ENCODE measurements at regions of chr13 and their contacts with region 1.

Region 1: GRCh38 chr13:113208424-113209335 is at the start of gene PCID2:
- DNase-seq: peak; percentile 60 to 93
- H3K4me3 ChIP-seq: peak within 1 kb of the TSS; percentile 98 to 99
- H3K27ac ChIP-seq: peak within 1 kb of the TSS; percentile 98
- H3K4me1 ChIP-seq: peaks cover 3 to 51% of the 10 kb centered on the region in 2 donors
- H3K27me3 ChIP-seq: no peaks in the 10 kb centered on the region
- CTCF ChIP-seq: no peak
- total RNA-seq, gene PCID2: 50.8 TPM

Region 2: DNA sequence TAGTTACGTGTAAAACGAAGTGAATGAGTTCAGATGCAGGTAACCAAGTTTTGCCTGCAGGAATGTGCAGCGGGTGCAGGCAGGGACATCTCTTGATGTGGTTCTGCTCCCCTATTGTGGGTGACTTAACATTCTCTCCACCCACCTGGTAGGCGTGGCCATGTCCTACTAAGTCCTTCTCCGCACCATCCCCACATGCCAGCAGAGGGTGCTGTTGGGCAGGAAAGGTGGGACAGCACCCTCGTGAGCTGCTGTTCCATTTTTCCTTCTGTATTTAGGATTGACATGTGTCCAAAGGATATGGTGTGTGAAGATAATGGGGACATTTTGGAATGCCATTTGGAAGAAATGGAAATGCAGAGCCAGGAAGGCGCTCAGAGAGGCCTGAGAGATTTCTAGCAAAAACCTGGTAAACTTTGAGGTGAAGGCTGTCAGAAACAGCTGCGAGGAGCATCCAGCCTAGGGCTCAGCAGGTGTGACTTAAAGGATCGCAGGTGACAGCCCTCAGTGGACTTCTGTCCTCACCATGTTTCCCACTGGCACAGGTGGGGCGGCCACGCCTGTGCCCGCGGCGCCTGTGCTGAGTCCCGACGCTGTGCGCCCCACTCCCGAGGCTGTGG is 265.9 kb before region 1 on chr13:
- intact Hi-C with region 1: loop called (anchors 5 kb)
- DNase-seq: peak; percentile 79 to 97
- H3K4me3 ChIP-seq: peak overlapping the region; percentile 69 to 80
- H3K27ac ChIP-seq: peak overlapping the region in 1 of 2 donors; percentile 5
- H3K4me1 ChIP-seq: peaks cover 9 to 10% of the 10 kb centered on the region in 2 donors
- H3K27me3 ChIP-seq: no peaks in the 10 kb centered on the region
- CTCF ChIP-seq: peak; percentile 78 to 97 (median 83)

Region 3: GRCh38 chr13:113153810-113154748 is 54.6 kb before region 1 on chr13:
- intact Hi-C with region 1: loop called (anchors 1 kb)
- DNase-seq: peak in 1 of 2 donors; percentile 88
- H3K4me3 ChIP-seq: peak overlapping the region; percentile 39 to 63
- H3K27ac ChIP-seq: peak overlapping the region; percentile 51 to 59
- H3K4me1 ChIP-seq: peaks cover 0 to 11% of the 10 kb centered on the region in 2 donors
- H3K27me3 ChIP-seq: no peaks in the 10 kb centered on the region
- CTCF ChIP-seq: no peak

Region 4: DNA sequence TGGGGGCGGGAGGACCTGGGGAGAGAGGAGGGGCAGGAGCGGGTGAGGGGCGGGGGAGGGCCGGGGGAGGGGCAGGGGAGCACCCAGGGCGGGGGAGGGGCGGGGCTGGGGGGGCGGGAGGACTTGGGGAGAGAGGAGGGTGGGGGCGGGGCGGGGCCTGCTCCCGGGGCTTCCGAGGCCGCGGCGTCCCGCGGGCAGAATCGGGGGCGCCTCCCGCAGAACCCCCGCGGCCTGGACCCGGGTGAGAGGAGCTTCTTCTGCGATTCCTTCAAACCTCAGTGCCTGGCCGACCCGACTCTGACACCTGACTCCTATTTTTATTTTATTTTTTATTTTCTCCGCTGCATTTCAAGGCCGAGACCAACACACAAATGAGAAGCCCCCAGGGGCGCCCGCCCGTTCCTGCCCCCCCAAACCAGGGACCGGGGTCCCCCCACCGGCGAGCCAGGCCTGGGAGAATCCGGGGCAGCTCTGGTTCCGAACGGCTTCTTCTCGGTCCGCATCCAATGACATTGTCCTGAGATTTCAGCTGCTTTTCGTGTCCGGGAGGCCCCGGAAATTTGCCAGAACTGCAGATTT is 155.7 kb after region 1 on chr13:
- intact Hi-C with region 1: loop called (anchors 5 kb)
- DNase-seq: peak in 1 of 2 donors; percentile 61
- H3K4me3 ChIP-seq: peak overlapping the region; percentile 45 to 85
- H3K27ac ChIP-seq: peak overlapping the region in 1 of 2 donors; percentile 44
- H3K4me1 ChIP-seq: peaks cover 7 to 8% of the 10 kb centered on the region in 2 donors
- H3K27me3 ChIP-seq: peaks cover 5% of the 10 kb centered on the region
- CTCF ChIP-seq: no peak

Region 5: GRCh38 chr13:113490496-113491417 is 282.1 kb after region 1 on chr13 and contains the start of gene DCUN1D2:
- intact Hi-C with region 1: loop called (anchors 2 kb)
- DNase-seq: peak; percentile 80 to 97
- H3K4me3 ChIP-seq: peak within 1 kb of the TSS; percentile 98 to 99
- H3K27ac ChIP-seq: peak within 1 kb of the TSS; percentile 88 to 95
- H3K4me1 ChIP-seq: peaks cover 23 to 48% of the 10 kb centered on the region in 2 donors
- H3K27me3 ChIP-seq: no peaks in the 10 kb centered on the region
- CTCF ChIP-seq: no peak
- total RNA-seq, gene DCUN1D2: 5.9 TPM